HEK293 (cell line): ENCODE measurements at regions of chr6 and their contacts with region 1.

Region 1: DNA sequence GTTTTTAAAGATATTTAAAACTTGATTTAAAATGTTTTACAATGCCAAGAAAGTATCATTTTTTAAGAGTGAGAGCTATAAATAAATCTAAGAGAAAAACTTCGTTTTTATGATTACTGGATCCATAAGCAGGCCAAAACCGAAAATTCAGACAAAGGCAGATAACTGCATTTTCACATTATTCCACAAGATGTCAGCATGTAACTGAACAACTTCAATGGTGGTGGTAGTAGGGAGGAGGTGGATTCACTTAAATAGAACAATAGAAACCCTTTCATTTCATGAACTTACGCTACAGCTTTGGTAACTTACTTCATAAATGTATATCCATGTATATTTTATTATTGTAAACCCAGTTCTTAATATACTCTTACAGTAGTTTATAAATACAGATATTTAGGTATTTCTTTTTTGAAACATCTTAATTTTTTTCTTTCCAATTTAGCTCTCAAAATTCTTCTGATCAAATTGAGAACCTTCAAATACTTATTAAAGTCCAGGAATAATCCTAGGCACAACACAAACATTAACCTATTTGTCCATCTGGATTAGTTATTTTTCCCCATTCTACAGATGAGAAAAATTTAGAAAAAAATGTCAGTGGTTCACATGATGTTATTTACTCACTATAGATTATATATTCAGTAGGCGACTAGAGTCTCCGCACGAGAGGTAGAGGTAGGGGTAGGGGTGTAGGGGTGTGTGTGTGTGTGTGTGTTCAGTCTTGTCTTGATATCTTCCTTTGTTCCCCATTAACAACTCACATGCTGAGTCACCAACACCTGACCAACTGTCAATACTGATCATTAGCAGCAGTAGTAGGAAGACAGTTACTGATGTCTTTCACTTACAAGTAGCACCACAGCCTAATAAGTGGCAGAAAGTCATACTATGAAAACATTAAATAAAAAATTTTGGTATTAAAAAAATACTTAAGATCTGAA is 111.5 kb downstream of the ARHGAP18 start:
- H3K4me3 ChIP-seq: no peak overlapping the region
- H3K27ac ChIP-seq: no peak overlapping the region
- H3K4me1 ChIP-seq: no peaks in the 10 kb centered on the region; the same call in 1 of the 2 replicates
- CTCF ChIP-seq: peak; percentile 60

Region 2: GRCh38 chr6:129331450-129332138 is 266.9 kb before region 1 on chr6:
- CTCF ChIA-PET with region 1: no interaction called
- POLR2A ChIA-PET with region 1: no interaction called
- H3K4me3 ChIP-seq: no peak overlapping the region
- H3K27ac ChIP-seq: no peak overlapping the region
- H3K4me1 ChIP-seq: peaks cover 4% of the 10 kb centered on the region
- CTCF ChIP-seq: no peak

Region 3: DNA sequence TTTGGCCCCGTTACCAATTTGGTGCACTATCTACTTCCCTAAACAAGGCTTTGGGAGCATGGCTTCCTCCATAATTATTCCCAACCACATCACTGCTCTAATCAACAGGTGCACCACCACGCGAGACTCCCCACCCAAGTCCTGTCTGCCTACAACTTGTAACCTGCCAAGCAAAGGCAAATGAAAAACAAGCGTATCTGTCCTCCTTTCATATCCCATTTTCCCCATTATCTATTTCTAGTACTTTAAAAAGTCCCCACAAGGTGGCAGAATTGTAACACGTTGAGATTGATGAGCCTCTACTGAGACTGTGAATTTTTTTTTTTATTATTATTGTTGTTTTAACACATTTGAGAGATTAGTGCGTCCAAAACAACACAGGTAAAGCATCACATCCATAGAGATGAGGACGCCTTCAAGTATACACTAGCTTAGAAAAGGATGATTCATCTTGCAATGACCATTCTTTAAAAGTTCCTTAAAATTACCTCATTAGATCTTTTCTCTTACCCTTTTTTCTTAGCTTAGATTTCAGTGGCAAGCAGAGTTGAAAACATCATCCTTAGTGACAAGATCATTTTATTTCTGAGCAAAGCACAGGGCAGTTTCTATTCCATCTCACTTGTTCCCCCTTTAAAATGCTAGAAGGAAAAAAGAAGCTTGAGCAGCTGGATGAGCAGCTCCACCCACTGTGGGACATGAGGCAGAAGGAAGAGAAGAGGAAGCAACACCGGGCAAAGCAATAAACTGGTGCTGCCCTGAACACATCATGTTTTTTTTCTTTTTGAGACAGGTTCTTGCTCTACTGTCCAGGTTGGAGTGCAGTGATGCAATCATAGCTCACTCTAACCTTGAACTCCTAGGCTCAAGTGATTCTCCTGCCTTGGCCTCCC is 99.3 kb before region 1 on chr6:
- CTCF ChIA-PET with region 1: interaction called, 47 read pairs
- POLR2A ChIA-PET with region 1: no interaction called
- H3K4me3 ChIP-seq: no peak overlapping the region
- H3K27ac ChIP-seq: no peak overlapping the region
- H3K4me1 ChIP-seq: peaks cover 3% of the 10 kb centered on the region; the same call in 1 of the 2 replicates
- CTCF ChIP-seq: peak; percentile 30; the same call in 1 of the 2 replicates

Region 4: GRCh38 chr6:129655334-129655733 is 56.8 kb after region 1 on chr6:
- CTCF ChIA-PET with region 1: interaction called, 16 read pairs
- POLR2A ChIA-PET with region 1: no interaction called
- H3K4me3 ChIP-seq: no peak overlapping the region
- H3K27ac ChIP-seq: no peak overlapping the region
- H3K4me1 ChIP-seq: no peaks in the 10 kb centered on the region
- CTCF ChIP-seq: no peak

Region 5: GRCh38 chr6:129717277-129717676 is 118.8 kb after region 1 on chr6:
- CTCF ChIA-PET with region 1: interaction called, 17 read pairs
- POLR2A ChIA-PET with region 1: interaction called, 3 read pairs
- H3K4me3 ChIP-seq: no peak overlapping the region
- H3K27ac ChIP-seq: no peak overlapping the region
- H3K4me1 ChIP-seq: no peaks in the 10 kb centered on the region
- CTCF ChIP-seq: no peak

Region 6: GRCh38 chr6:129748212-129748900 is 149.8 kb after region 1 on chr6:
- CTCF ChIA-PET with region 1: interaction called, 39 read pairs
- POLR2A ChIA-PET with region 1: no interaction called
- H3K4me3 ChIP-seq: no peak overlapping the region
- H3K27ac ChIP-seq: no peak overlapping the region
- H3K4me1 ChIP-seq: peaks cover 17% of the 10 kb centered on the region
- CTCF ChIP-seq: no peak

Region 7: GRCh38 chr6:129774697-129775447 is 176.4 kb after region 1 on chr6:
- CTCF ChIA-PET with region 1: interaction called, 33 read pairs
- POLR2A ChIA-PET with region 1: no interaction called
- H3K4me3 ChIP-seq: peak overlapping the region; percentile 7; the same call in 1 of the 2 replicates
- H3K27ac ChIP-seq: no peak overlapping the region
- H3K4me1 ChIP-seq: no peaks in the 10 kb centered on the region
- CTCF ChIP-seq: peak; percentile 78

Region 8: GRCh38 chr6:129981598-129981997 is 383.1 kb after region 1 on chr6:
- CTCF ChIA-PET with region 1: interaction called, 13 read pairs
- POLR2A ChIA-PET with region 1: no interaction called
- H3K4me3 ChIP-seq: no peak overlapping the region
- H3K27ac ChIP-seq: no peak overlapping the region
- H3K4me1 ChIP-seq: no peaks in the 10 kb centered on the region
- CTCF ChIP-seq: no peak

Region 9: GRCh38 chr6:131167773-131168172 is 1569.3 kb after region 1 on chr6:
- CTCF ChIA-PET with region 1: no interaction called
- POLR2A ChIA-PET with region 1: no interaction called
- H3K4me3 ChIP-seq: no peak overlapping the region
- H3K27ac ChIP-seq: no peak overlapping the region
- H3K4me1 ChIP-seq: peaks cover 4% of the 10 kb centered on the region; the same call in 1 of the 2 replicates
- CTCF ChIP-seq: no peak